Tibial artery (tissue), 4 donors: ENCODE measurements at regions of chr1 and their contacts with region 1.

Region 1: DNA sequence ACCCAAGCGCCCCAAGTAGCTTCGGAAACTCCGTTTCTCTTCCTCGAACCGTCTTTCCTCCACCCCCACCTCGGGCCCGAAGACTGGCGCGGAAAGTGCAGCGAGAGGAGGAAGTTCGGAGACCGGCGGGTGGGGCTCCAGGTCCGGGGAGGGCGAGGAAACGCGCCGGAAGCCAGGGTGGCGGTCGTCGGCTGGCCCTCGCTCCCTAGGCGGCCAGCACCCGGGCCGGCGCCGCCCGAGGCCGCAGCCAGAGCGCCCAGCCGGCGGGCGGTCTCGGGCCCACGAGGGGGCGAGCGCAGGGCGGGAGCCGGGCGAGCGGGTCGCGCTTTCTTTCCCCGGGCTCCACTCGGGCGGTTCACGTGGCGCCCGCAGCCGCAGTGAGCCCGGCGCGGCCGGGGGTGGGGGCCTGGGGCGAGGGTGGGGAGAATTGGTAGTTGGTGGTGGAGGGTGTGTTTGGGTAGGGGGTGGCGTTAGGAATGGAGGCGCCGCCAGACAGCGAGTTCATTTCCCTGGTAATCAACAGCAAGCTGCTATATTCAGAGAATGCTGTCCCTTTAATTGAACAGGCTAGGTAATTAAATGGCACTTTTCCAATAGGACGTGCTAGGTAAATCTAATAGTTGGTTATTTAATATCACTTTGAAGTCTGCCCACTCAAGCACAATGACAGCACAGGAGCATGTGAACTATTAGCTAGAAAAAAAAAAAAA is 6.7 kb downstream of the LMO4 start:
- DNase-seq: peak; percentile 64 to 83
- H3K4me3 ChIP-seq: peak overlapping the region; percentile 65 to 79
- H3K27ac ChIP-seq: peak overlapping the region; percentile 94 to 98
- H3K4me1 ChIP-seq: peaks cover 0 to 60% (median 43%) of the 10 kb centered on the region in 4 donors
- H3K27me3 ChIP-seq: no peaks in the 10 kb centered on the region
- CTCF ChIP-seq: peak in 1 of 2 experiments; percentile 31

Region 2: GRCh38 chr1:86913896-86914634 is 421.3 kb before region 1 on chr1 and contains the start of gene SELENOF:
- intact Hi-C with region 1: loop called (anchors 10 kb)
- DNase-seq: peak; percentile 99 to 100
- H3K4me3 ChIP-seq: peak within 1 kb of the TSS; percentile 79 to 92
- H3K27ac ChIP-seq: peak within 1 kb of the TSS; percentile 87 to 92
- H3K4me1 ChIP-seq: peaks cover 0 to 31% (median 24%) of the 10 kb centered on the region in 4 donors
- H3K27me3 ChIP-seq: no peaks in the 10 kb centered on the region
- CTCF ChIP-seq: peak in 1 of 2 experiments; percentile 16

Region 3: DNA sequence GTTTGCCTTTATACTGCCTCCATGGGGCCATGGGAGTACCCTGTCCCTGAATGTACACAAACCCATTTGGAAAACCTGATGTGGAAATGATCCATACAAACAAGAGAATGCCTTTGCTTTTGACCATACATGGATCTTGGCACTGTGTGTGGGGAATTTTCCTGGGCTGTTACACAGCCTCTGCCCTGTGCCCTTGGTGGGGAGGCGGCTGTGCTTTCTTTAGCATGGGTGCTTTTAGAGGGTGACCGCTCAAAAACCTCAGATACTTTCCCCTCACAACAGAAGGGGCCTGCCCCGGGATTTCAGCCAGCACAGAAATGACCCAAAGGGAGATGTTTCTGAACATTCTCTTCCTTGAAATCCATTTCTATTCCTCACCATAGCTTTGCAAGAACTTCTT is 188.1 kb after region 1 on chr1:
- intact Hi-C with region 1: loop called (anchors 10 kb)
- DNase-seq: peak; percentile 33 to 84
- H3K4me3 ChIP-seq: peak overlapping the region in 1 of 2 donors; percentile 2
- H3K27ac ChIP-seq: peak overlapping the region; percentile 66 to 84
- H3K4me1 ChIP-seq: peaks cover 0 to 51% (median 13%) of the 10 kb centered on the region in 4 donors
- H3K27me3 ChIP-seq: no peaks in the 10 kb centered on the region
- CTCF ChIP-seq: no peak

Region 4: DNA sequence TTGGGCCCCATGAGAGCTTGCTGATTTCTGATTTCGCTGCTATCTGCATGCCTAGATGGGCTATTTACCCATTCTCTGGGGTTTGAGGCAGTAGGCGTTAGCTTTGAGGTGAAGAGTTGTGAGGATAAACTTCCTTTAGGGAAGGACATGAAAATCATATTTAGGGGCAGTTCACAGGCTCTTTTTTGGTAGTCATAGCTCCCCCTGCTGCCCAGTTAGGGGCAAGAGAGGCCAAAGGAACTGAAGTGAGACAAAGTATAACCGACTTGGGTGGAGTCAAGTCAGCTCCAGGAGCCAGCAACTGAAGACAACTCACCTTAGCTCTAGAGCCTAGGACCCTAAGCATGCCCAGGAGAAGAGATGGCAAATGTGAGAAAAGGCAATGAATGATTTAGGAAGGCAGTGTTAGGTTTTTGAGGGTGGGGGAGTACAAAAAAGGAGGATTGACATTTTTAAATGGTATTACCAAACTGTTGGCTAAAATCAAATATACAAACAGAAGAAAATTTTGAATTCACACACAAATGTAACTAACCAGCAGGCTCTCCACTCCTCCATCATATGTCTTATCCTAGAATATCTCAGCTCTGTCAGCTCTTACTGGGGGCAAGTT is 618.5 kb after region 1 on chr1:
- intact Hi-C with region 1: loop called (anchors 5 kb)
- DNase-seq: peak; percentile 65 to 80
- H3K4me3 ChIP-seq: no peak overlapping the region
- H3K27ac ChIP-seq: peak overlapping the region; percentile 20 to 69
- H3K4me1 ChIP-seq: peaks cover 0 to 81% (median 18%) of the 10 kb centered on the region in 4 donors
- H3K27me3 ChIP-seq: no peaks in the 10 kb centered on the region
- CTCF ChIP-seq: peak; percentile 67 to 74